Activated CD8-positive, alpha-beta T cell treated with anti-CD3 and anti-CD28 coated beads for 36 hours (primary cell): ENCODE measurements at regions of chr22 and their contacts with region 1.

Region 1: GRCh38 chr22:22060200-22061084 is 77.9 kb upstream of the TOP3B start:
- DNase-seq: peak; percentile 81
- ATAC-seq: peak; percentile 80
- H3K4me3 Mint-ChIP-seq: no peak overlapping the region
- H3K27ac Mint-ChIP-seq: no peak overlapping the region
- H3K4me1 Mint-ChIP-seq: no peaks in the 10 kb centered on the region
- H3K27me3 Mint-ChIP-seq: peaks cover 26% of the 10 kb centered on the region
- CTCF ChIP-seq: peak; percentile 83

Region 2: GRCh38 chr22:21567456-21568346 is 492.7 kb before region 1 on chr22 and contains the start of gene UBE2L3:
- CTCF ChIA-PET with region 1: no interaction called
- POLR2A ChIA-PET with region 1: no interaction called
- intact Hi-C with region 1: no loop called
- DNase-seq: peak; percentile 89
- ATAC-seq: peak; percentile 83
- H3K4me3 Mint-ChIP-seq: peak within 1 kb of the TSS; percentile 91
- H3K27ac Mint-ChIP-seq: peak within 1 kb of the TSS; percentile 95
- H3K4me1 Mint-ChIP-seq: peaks cover 41% of the 10 kb centered on the region
- H3K27me3 Mint-ChIP-seq: no peaks in the 10 kb centered on the region
- CTCF ChIP-seq: no peak
- total RNA-seq, gene UBE2L3: 50.3 to 54.9 TPM

Region 3: DNA sequence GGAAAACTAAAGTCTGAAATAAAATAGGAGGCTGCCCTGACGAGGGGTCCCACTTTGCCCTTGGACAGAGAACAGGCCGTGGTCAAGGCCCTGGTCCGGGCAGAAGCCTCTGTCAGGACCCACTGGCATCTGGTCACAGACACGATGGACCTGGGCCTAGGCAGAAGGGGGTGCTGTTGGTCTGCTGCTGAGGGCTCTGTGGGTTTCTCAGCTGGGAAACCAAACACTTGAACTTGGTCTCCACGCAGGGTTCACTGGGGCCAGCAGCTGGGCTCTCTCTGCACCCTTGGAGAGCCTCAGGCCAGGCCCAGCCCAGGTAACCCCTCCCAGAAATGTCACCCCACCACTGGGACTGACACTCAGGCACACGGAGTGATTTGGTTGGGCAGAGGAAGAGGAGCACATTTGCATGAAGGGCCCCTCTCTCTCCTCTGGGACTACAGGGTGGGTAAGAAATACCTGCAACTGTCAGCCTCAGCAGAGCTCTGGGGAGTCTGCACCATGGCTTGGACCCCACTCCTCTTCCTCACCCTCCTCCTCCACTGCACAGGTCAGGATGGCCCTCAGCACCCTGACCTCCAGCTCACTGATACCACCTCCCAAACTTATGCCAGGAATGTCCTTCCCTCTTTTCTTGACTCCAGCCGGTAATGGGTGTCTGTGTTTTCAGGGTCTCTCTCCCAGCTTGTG is 29.8 kb before region 1 on chr22:
- CTCF ChIA-PET with region 1: interaction called, 13 read pairs
- POLR2A ChIA-PET with region 1: no interaction called
- intact Hi-C with region 1: no loop called
- DNase-seq: peak; percentile 8
- ATAC-seq: no peak
- H3K4me3 Mint-ChIP-seq: no peak overlapping the region
- H3K27ac Mint-ChIP-seq: no peak overlapping the region
- H3K4me1 Mint-ChIP-seq: no peaks in the 10 kb centered on the region
- H3K27me3 Mint-ChIP-seq: peaks cover 3% of the 10 kb centered on the region
- CTCF ChIP-seq: no peak

Region 4: GRCh38 chr22:22043296-22044078 is 17.0 kb before region 1 on chr22:
- CTCF ChIA-PET with region 1: interaction called, 10 read pairs
- POLR2A ChIA-PET with region 1: no interaction called
- intact Hi-C with region 1: no loop called
- DNase-seq: no peak
- ATAC-seq: no peak
- H3K4me3 Mint-ChIP-seq: no peak overlapping the region
- H3K27ac Mint-ChIP-seq: no peak overlapping the region
- H3K4me1 Mint-ChIP-seq: peaks cover 8% of the 10 kb centered on the region
- H3K27me3 Mint-ChIP-seq: peaks cover 9% of the 10 kb centered on the region
- CTCF ChIP-seq: no peak

Region 5: DNA sequence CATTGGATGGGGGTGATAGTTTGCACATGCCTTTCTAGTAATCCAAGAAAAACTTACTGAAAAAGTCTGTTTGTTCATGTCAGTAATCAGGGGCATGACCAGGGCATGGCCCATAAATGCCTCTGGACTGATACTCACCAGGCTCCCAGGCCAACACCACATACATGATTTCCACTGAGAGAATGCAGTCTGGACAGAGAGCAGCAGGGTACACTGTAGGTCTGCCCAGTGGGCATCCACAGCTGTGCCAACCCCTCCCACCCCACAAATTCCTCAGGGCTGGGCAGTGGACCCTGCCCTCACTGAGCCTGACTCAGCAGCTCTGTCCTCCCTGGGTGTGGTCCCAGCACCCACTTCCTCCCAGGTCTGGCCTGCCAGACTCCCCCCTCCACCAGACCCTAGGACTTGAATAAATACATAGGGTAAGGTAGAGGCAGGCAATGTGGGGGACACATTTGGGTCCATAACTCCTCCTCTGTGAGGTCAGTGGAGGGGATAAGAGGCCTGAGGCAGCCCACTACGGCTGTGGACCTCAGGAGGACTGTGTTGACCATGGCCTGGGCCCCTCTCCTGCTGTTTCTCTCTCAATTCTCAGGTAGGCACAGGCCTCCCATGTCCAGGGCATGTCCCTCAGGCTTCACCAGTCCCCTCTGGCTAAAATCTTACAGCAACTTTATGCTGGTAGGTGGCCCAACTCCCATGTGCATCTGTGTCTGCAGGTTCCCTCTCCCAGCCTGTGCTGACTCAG is 14.4 kb after region 1 on chr22:
- CTCF ChIA-PET with region 1: interaction called, 29 read pairs
- POLR2A ChIA-PET with region 1: no interaction called
- intact Hi-C with region 1: no loop called
- DNase-seq: no peak
- ATAC-seq: no peak
- H3K4me3 Mint-ChIP-seq: no peak overlapping the region
- H3K27ac Mint-ChIP-seq: no peak overlapping the region
- H3K4me1 Mint-ChIP-seq: no peaks in the 10 kb centered on the region
- H3K27me3 Mint-ChIP-seq: peaks cover 5% of the 10 kb centered on the region
- CTCF ChIP-seq: no peak

Region 6: GRCh38 chr22:22110548-22111266 is 50.3 kb after region 1 on chr22:
- CTCF ChIA-PET with region 1: interaction called, 11 read pairs
- POLR2A ChIA-PET with region 1: no interaction called
- intact Hi-C with region 1: no loop called
- DNase-seq: peak; percentile 68
- ATAC-seq: peak; percentile 90
- H3K4me3 Mint-ChIP-seq: no peak overlapping the region
- H3K27ac Mint-ChIP-seq: no peak overlapping the region
- H3K4me1 Mint-ChIP-seq: peaks cover 10% of the 10 kb centered on the region
- H3K27me3 Mint-ChIP-seq: no peaks in the 10 kb centered on the region
- CTCF ChIP-seq: peak; percentile 60